Endothelial cell of umbilical vein (primary cell): ENCODE measurements at regions of chr2 and their contacts with region 1.

Region 1: DNA sequence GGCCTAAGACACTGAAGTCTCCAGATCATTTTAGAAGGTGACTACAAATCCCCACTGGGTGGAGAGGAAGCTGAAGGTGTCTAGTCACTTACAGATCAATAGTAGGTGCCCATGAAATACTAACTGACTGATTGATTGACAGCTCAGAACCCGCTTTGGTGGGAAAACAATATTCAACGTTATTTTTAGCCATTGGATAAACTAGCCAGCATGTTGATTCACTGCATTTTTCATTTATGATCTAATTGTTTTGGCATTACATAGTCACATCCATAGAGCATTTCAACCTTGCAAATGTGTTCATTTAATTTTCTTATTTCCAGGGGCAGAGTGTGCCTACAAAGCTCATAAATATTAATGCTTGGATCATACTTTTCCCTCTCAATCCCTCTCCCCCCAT is 162.3 kb downstream of the MREG start:
- DNase-seq: peak; percentile 92
- H3K4me3 ChIP-seq: no peak overlapping the region
- H3K27ac ChIP-seq: peak overlapping the region; percentile 98
- H3K4me1 ChIP-seq: peaks cover 48% of the 10 kb centered on the region
- H3K27me3 ChIP-seq: no peaks in the 10 kb centered on the region
- CTCF ChIP-seq: no peak
- POLR2A ChIP-seq: peak; percentile 31

Region 2: DNA sequence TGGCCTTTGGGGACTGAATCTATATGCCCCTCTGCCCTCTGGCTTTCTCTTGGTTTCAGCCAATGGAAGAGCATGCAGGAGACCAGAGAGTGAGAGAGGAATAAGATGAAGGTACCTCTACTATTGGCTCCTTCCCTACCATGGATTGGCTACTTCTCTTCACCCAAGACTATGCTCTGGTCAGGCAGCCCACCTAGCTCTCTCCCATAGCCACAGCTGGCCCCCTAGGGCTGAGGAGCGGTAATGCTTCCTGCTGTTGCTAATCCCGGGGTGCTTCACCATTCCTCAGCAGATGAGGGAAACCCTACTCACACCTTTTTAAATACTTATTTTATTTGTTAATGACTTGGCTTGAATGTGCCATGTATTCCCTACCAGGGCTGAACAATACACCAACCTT is 19.9 kb after region 1 on chr2:
- CTCF ChIA-PET with region 1: interaction called, 6 read pairs
- POLR2A ChIA-PET with region 1: interaction called, 3 read pairs
- dilution Hi-C with region 1: no loop called
- intact Hi-C with region 1: loop called (anchors 2 kb)
- DNase-seq: no peak
- H3K4me3 ChIP-seq: no peak overlapping the region
- H3K27ac ChIP-seq: no peak overlapping the region
- H3K4me1 ChIP-seq: peaks cover 5% of the 10 kb centered on the region
- H3K27me3 ChIP-seq: no peaks in the 10 kb centered on the region
- CTCF ChIP-seq: peak; percentile 33 to 40
- POLR2A ChIP-seq: no peak